CD4-positive, alpha-beta memory T cell (primary cell): ENCODE measurements at regions of chr4 and their contacts with region 1.

Region 1: GRCh38 chr4:101020956-101021355 is 326.4 kb downstream of the PPP3CA start:
- DNase-seq: peak; percentile 40 to 58 (median 47)
- H3K4me3 ChIP-seq: peak overlapping the region in 1 of 2 donors; percentile 37
- H3K4me3 Mint-ChIP-seq: peak overlapping the region; percentile 46 to 80 (median 72)
- H3K27ac ChIP-seq: peak overlapping the region; percentile 51
- H3K27ac Mint-ChIP-seq: peak overlapping the region; percentile 48 to 97 (median 89)
- H3K4me1 ChIP-seq: peaks cover 64% of the 10 kb centered on the region
- H3K4me1 Mint-ChIP-seq: peaks cover 39 to 71% (median 53%) of the 10 kb centered on the region in 4 donors
- H3K27me3 ChIP-seq: no peaks in the 10 kb centered on the region
- H3K27me3 Mint-ChIP-seq: no peaks in the 10 kb centered on the region

Region 2: DNA sequence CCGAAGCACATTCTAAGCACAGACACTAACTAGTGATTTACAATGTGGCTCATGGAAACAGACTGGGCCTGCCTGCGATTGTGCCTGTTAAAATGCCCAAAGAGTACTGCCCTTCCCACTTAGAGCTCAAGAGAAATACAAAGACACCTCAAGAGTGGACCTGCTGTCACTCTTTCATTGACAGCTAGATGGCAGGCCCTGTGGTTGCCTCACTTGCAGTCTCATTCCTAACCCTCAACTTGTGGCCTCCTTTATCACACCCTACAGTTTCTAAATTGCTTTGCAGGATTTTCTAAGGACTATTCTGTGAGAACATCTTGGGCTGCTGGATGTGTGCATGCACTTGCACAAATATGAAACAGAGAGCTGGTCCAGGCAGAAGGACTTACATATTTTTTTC is 172.1 kb before region 1 on chr4:
- CTCF ChIA-PET with region 1: interaction called, 3 read pairs
- POLR2A ChIA-PET with region 1: no interaction called
- intact Hi-C with region 1: loop called (anchors 10 kb)
- DNase-seq: peak in 4 of 5 donors; percentile 2 to 5 (median 4)
- H3K4me3 ChIP-seq: no peak overlapping the region
- H3K4me3 Mint-ChIP-seq: no peak overlapping the region
- H3K27ac ChIP-seq: no peak overlapping the region
- H3K27ac Mint-ChIP-seq: no peak overlapping the region
- H3K4me1 ChIP-seq: no peaks in the 10 kb centered on the region
- H3K4me1 Mint-ChIP-seq: peaks cover 0 to 2% (median 0%) of the 10 kb centered on the region in 4 donors
- H3K27me3 ChIP-seq: no peaks in the 10 kb centered on the region
- H3K27me3 Mint-ChIP-seq: no peaks in the 10 kb centered on the region

Region 3: DNA sequence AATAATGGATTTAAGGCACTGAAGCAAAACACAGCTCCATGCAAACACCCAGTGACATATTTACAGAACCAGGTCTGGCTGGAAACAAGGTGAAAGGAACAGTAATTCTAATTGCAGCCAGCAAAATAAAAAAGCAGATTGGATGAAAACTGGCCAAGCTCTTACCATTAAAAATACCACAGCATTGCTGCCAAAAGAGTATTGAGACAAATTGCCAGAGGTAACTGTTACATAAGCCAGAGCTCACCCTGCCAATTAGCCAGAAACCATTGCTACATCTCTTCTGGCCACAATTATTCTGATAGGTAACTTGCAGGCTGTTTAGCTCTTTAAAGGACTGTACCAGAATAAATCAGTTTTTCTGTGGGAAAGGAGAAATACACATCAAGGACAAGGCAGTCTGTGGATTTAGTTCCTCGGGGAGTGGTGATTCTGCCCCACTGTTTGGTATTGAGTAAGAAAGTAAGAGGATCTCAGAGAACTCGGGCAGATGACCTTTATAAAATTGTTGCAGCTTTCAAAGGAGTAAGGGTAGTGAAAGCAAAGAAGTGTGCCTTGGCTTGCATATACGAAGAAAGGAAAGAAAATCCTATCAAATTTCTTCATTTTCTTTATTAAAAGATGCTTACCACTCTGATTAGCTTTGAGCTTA is 43.1 kb before region 1 on chr4:
- CTCF ChIA-PET with region 1: interaction called, 3 read pairs
- POLR2A ChIA-PET with region 1: interaction called, 5 read pairs
- intact Hi-C with region 1: loop called (anchors 5 kb)
- DNase-seq: no peak
- H3K4me3 ChIP-seq: no peak overlapping the region
- H3K4me3 Mint-ChIP-seq: no peak overlapping the region
- H3K27ac ChIP-seq: no peak overlapping the region
- H3K27ac Mint-ChIP-seq: no peak overlapping the region
- H3K4me1 ChIP-seq: no peaks in the 10 kb centered on the region
- H3K4me1 Mint-ChIP-seq: no peaks in the 10 kb centered on the region
- H3K27me3 ChIP-seq: no peaks in the 10 kb centered on the region
- H3K27me3 Mint-ChIP-seq: no peaks in the 10 kb centered on the region

Region 4: GRCh38 chr4:101037938-101038413 is 17.0 kb after region 1 on chr4:
- CTCF ChIA-PET with region 1: interaction called, 11 read pairs
- POLR2A ChIA-PET with region 1: interaction called, 51 read pairs
- intact Hi-C with region 1: loop called (anchors 1 kb)
- DNase-seq: peak in 4 of 5 donors; percentile 9 to 39 (median 36)
- H3K4me3 ChIP-seq: no peak overlapping the region
- H3K4me3 Mint-ChIP-seq: peak overlapping the region in 7 of 8 donors; percentile 4 to 85 (median 72)
- H3K27ac ChIP-seq: no peak overlapping the region
- H3K27ac Mint-ChIP-seq: peak overlapping the region; percentile 67 to 90 (median 77)
- H3K4me1 ChIP-seq: peaks cover 47% of the 10 kb centered on the region
- H3K4me1 Mint-ChIP-seq: peaks cover 35 to 48% (median 41%) of the 10 kb centered on the region in 4 donors
- H3K27me3 ChIP-seq: no peaks in the 10 kb centered on the region
- H3K27me3 Mint-ChIP-seq: no peaks in the 10 kb centered on the region

Region 5: DNA sequence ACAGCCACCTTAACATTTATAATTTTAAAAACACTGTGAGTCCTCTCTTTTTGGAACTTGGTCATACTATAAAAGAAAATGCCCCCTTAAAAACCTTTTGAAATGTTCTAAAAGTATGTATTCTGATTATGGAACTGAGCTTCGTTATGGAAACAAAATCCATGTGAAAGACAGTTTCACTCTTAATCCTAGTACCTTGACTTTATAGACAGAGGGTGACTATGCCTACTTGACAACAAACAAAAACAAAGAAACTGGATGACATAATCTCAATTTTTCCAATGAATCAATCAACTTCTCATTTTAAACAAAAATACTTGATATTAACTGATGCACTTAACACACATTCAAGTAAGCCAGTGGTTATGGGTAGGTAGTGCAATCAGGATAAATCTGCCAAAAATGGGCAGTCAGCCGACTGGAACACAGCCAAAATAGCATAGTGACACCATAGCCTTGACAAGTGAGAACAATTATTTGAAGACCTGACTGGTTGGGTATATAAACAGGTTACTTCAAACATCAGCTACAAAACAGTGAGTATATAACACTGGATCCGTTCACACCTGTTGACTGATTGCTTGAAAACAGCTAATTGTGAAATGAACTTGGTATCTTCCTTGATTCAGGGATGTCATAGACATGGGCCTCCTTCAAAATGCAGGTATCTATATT is 60.9 kb after region 1 on chr4:
- CTCF ChIA-PET with region 1: no interaction called
- POLR2A ChIA-PET with region 1: no interaction called
- intact Hi-C with region 1: no loop called
- DNase-seq: no peak
- H3K4me3 ChIP-seq: no peak overlapping the region
- H3K4me3 Mint-ChIP-seq: no peak overlapping the region
- H3K27ac ChIP-seq: no peak overlapping the region
- H3K27ac Mint-ChIP-seq: peak overlapping the region in 1 of 7 donors; percentile 15
- H3K4me1 ChIP-seq: no peaks in the 10 kb centered on the region
- H3K4me1 Mint-ChIP-seq: peaks cover 0 to 8% (median 3%) of the 10 kb centered on the region in 4 donors
- H3K27me3 ChIP-seq: no peaks in the 10 kb centered on the region
- H3K27me3 Mint-ChIP-seq: no peaks in the 10 kb centered on the region

Region 6: DNA sequence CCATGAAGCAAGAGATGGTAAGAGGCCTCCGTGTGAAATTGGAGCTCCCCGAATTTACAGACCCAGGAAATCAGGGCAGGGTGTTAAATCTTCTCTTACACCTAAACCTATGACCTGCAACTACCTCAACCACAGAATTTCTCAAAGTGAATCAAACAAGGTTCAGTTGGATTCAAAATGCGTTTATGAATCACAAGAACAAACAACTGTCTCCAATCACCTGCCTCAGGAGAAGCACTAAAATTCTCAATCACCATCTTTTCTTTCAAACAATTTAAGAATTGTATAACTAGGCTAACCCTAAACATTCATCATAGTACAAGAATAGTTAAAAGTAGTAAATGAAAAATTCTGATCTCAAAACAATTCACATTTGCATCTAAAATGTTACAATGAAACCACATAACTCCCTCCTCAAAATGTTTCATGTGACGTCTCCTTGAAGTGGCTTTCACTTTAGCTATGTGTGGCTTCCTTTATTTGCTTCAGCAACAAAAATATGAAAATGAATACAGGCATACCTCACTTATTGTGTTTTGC is 307.2 kb after region 1 on chr4:
- CTCF ChIA-PET with region 1: interaction called, 3 read pairs
- POLR2A ChIA-PET with region 1: interaction called, 11 read pairs
- intact Hi-C with region 1: loop called (anchors 5 kb)
- DNase-seq: peak; percentile 63 to 77 (median 70)
- H3K4me3 ChIP-seq: no peak overlapping the region
- H3K4me3 Mint-ChIP-seq: peak overlapping the region; percentile 76 to 91 (median 83)
- H3K27ac ChIP-seq: peak overlapping the region; percentile 42
- H3K27ac Mint-ChIP-seq: peak overlapping the region; percentile 84 to 97 (median 92)
- H3K4me1 ChIP-seq: peaks cover 48% of the 10 kb centered on the region
- H3K4me1 Mint-ChIP-seq: peaks cover 44 to 95% (median 73%) of the 10 kb centered on the region in 4 donors
- H3K27me3 ChIP-seq: no peaks in the 10 kb centered on the region
- H3K27me3 Mint-ChIP-seq: no peaks in the 10 kb centered on the region